Heart left ventricle (tissue), 16 donors: ENCODE measurements at regions of chr1 and their contacts with region 1.

Region 1: GRCh38 chr1:9110669-9111356 is 18.1 kb downstream of the GPR157 start:
- DNase-seq: peak; percentile 83 to 93 (median 89)
- ATAC-seq: peak; percentile 48 to 82 (median 78)
- H3K4me3 ChIP-seq: no peak overlapping the region
- H3K27ac ChIP-seq: no peak overlapping the region
- H3K4me1 ChIP-seq: peaks cover 0 to 23% (median 6%) of the 10 kb centered on the region in 12 donors
- H3K27me3 ChIP-seq: no peaks in the 10 kb centered on the region
- CTCF ChIP-seq: peak; percentile 85 to 97 (median 92)
- POLR2A ChIP-seq: no peak

Region 2: GRCh38 chr1:9181176-9181906 is 70.5 kb after region 1 on chr1:
- intact Hi-C with region 1: loop called in 1 of 10 experiments (anchors 5 kb)
- DNase-seq: peak; percentile 67 to 89 (median 76)
- ATAC-seq: peak; percentile 54 to 80 (median 70)
- H3K4me3 ChIP-seq: peak overlapping the region; percentile 55 to 86 (median 76)
- H3K27ac ChIP-seq: peak overlapping the region in 10 of 12 donors; percentile 15 to 85 (median 70)
- H3K4me1 ChIP-seq: peaks cover 0 to 57% (median 13%) of the 10 kb centered on the region in 12 donors
- H3K27me3 ChIP-seq: peaks cover 0 to 20% (median 0%) of the 10 kb centered on the region in 9 donors
- CTCF ChIP-seq: peak; percentile 91 to 98 (median 96)
- POLR2A ChIP-seq: no peak

Region 3: GRCh38 chr1:9486466-9487140 is 375.8 kb after region 1 on chr1:
- intact Hi-C with region 1: loop called in 4 of 10 experiments (anchors 2 to 10 kb)
- DNase-seq: no peak
- ATAC-seq: no peak
- H3K4me3 ChIP-seq: no peak overlapping the region
- H3K27ac ChIP-seq: peak overlapping the region in 2 of 12 donors; percentile 4 to 50
- H3K4me1 ChIP-seq: peaks cover 0 to 3% (median 0%) of the 10 kb centered on the region in 12 donors
- H3K27me3 ChIP-seq: no peaks in the 10 kb centered on the region
- CTCF ChIP-seq: no peak
- POLR2A ChIP-seq: no peak